AG04449 (cell line): ENCODE measurements at regions of chr6 and their contacts with region 1.

Region 1: GRCh38 chr6:13795041-13795750 is 19.2 kb downstream of the MCUR1 start:
- DNase-seq: peak; percentile 31
- H3K4me3 ChIP-seq: no peak overlapping the region
- CTCF ChIP-seq: peak; percentile 87

Region 2: GRCh38 chr6:13508711-13509705 is 286.2 kb before region 1 on chr6:
- CTCF ChIA-PET with region 1: no interaction called
- POLR2A ChIA-PET with region 1: no interaction called
- DNase-seq: no peak
- H3K4me3 ChIP-seq: no peak overlapping the region
- CTCF ChIP-seq: no peak

Region 3: DNA sequence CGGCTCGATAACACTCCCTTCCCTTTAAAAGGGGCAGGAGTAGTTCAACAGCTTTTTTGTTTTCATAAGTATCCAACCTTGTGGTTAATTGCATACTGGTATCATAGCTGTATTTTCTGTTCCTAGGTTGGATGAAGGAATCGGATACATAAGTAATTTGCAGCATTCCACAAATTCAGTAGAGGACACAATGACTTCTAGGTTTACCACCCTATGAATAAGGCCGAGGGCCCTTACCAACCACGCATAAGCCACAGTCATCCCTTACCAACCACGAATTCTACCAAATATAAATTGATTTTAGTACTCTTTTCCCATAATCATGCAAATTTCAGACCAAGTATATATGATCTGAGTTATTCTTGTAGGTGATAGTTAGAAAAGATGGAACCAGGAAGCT is 17.2 kb before region 1 on chr6:
- CTCF ChIA-PET with region 1: interaction called, 25 read pairs
- POLR2A ChIA-PET with region 1: no interaction called
- DNase-seq: no peak
- H3K4me3 ChIP-seq: no peak overlapping the region
- CTCF ChIP-seq: no peak

Region 4: DNA sequence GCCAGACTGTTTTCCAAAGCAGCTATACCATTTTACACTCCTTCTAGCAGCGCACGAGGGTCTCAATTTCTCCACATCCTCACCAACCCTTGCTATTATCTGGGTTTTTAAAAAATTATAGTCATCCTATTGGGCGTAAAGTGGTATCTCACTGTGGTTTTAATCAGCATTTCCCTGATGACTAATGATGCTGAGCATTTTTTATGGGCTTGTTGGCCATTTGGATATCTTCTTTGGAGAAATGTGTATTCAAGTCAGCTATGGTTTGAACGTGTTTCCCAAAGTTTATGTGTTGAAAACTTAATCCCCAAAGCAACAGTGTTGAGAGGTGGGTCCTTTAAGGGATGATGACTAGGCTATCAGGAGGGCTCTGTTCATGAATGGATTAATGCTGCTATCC is 12.5 kb after region 1 on chr6:
- CTCF ChIA-PET with region 1: interaction called, 44 read pairs
- POLR2A ChIA-PET with region 1: no interaction called
- DNase-seq: no peak
- H3K4me3 ChIP-seq: no peak overlapping the region
- CTCF ChIP-seq: no peak

Region 5: DNA sequence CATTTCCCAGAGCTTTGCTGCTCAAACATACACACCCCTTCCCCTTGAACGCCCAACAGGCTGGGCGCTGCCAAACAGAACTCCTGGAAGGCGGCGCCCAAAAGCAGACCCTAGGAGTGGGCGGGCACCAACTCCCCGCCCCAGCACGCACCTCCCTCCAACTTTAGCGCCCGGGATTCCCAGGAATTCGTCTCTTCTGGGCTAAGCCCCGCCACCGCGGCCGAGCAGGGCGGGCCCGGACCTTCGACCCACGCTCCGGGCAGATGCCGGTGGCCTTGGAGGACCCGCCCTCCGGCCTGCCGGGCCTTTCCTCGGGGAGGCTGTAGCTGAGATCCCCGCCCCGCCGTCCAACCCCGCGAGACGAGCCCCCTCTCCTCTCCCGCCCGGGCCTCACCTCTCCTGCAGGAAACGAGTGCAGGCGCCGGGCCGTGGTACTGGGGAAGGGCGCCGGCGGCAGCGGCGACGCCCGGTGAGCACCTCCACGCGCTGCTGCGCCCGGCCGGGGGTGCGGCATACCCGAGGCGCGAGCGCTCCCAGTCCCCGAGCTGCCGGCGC is 18.5 kb after region 1 on chr6:
- CTCF ChIA-PET with region 1: interaction called, 44 read pairs
- POLR2A ChIA-PET with region 1: no interaction called
- DNase-seq: no peak
- H3K4me3 ChIP-seq: peak overlapping the region; percentile 75
- CTCF ChIP-seq: no peak

Region 6: DNA sequence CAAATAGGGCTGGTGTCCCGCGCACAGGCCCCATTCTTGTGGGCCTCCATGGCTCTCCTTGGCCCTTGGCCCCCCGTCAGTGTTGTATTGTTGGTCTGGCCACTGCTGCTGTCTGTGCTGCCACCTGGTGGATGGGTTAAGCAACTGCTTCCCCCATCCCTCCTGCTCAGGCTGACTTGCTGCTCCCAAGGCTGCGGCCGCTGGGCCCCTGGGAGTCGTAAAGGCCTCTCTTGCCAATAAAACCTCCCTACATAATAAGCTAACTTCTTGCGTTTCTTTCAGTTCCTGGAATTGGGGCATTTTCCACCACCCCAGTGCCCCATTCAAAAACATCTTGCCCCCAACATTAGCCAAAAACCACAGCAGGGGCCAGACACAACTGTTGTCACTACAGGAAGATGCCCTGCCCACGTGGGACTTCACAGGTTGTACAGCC is 349.5 kb after region 1 on chr6:
- CTCF ChIA-PET with region 1: interaction called, 20 read pairs
- POLR2A ChIA-PET with region 1: no interaction called
- DNase-seq: no peak
- H3K4me3 ChIP-seq: no peak overlapping the region
- CTCF ChIP-seq: peak; percentile 95